ENCODE measurements at regions of chr7 and their contacts with region 1.

Region 1: GRCh38 chr7:81457852-81458522 is 311.9 kb downstream of the HGF start:
- DNase-seq: no peak
- H3K4me3 ChIP-seq: no peak overlapping the region
- H3K27ac ChIP-seq: no peak overlapping the region
- H3K4me1 ChIP-seq: no peaks in the 10 kb centered on the region
- H3K27me3 ChIP-seq: no peaks in the 10 kb centered on the region
- CTCF ChIP-seq: peak in 1 of 3 donors; percentile 38
- POLR2A ChIP-seq: no peak

Region 2: DNA sequence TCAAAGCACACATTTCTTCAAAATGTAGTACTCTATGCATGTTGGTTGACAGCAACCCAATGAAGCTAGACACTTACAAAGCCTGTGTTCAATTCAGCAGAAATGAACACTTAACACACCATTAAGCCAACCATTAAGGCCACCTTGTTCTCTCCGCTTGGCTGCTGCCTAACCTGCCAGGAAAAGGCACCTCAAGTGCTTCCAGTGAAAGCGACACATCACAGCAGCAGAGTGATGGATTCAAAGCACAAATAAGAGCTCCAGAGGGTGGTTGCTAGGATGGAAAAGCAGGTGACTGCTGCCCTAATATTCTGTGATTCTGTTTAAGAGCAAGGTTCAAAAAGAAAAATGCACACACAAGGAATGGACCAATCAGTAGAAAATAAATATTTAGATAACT is 1404.9 kb before region 1 on chr7:
- intact Hi-C with region 1: loop called (anchors 5 kb)
- DNase-seq: no peak
- H3K4me3 ChIP-seq: no peak overlapping the region
- H3K27ac ChIP-seq: no peak overlapping the region
- H3K4me1 ChIP-seq: no peaks in the 10 kb centered on the region
- H3K27me3 ChIP-seq: no peaks in the 10 kb centered on the region
- CTCF ChIP-seq: no peak
- POLR2A ChIP-seq: no peak